SK-N-SH (cell line): ENCODE measurements at regions of chr17 and their contacts with region 1.

Region 1: GRCh38 chr17:29219378-29220047 is 27.1 kb upstream of the CRYBA1 start:
- DNase-seq: peak; percentile 86
- H3K4me3 ChIP-seq: peak overlapping the region in 1 of 2 experiments; percentile 17; a peak in 1 of 4 replicates
- H3K27ac ChIP-seq: no peak overlapping the region
- H3K4me1 ChIP-seq: peaks cover 0 to 6% of the 10 kb centered on the region in 2 experiments; a peak in 1 of 4 replicates
- H3K27me3 ChIP-seq: no peaks in the 10 kb centered on the region
- CTCF ChIP-seq: peak; percentile 97
- EP300 ChIP-seq: no peak; a peak in 1 of 4 replicates
- RAD21 ChIP-seq: peak; percentile 75

Region 2: GRCh38 chr17:29102741-29103181 is 116.8 kb before region 1 on chr17:
- CTCF ChIA-PET with region 1: no interaction called
- POLR2A ChIA-PET with region 1: no interaction called
- DNase-seq: peak; percentile 80
- H3K4me3 ChIP-seq: no peak overlapping the region
- H3K27ac ChIP-seq: peak overlapping the region in 1 of 2 experiments; percentile 95; a peak in 2 of 4 replicates
- H3K4me1 ChIP-seq: peaks cover 0 to 30% of the 10 kb centered on the region in 2 experiments; a peak in 2 of 4 replicates
- H3K27me3 ChIP-seq: no peaks in the 10 kb centered on the region
- CTCF ChIP-seq: no peak
- EP300 ChIP-seq: peak in 1 of 2 experiments; percentile 7; a peak in 1 of 4 replicates
- RAD21 ChIP-seq: no peak

Region 3: DNA sequence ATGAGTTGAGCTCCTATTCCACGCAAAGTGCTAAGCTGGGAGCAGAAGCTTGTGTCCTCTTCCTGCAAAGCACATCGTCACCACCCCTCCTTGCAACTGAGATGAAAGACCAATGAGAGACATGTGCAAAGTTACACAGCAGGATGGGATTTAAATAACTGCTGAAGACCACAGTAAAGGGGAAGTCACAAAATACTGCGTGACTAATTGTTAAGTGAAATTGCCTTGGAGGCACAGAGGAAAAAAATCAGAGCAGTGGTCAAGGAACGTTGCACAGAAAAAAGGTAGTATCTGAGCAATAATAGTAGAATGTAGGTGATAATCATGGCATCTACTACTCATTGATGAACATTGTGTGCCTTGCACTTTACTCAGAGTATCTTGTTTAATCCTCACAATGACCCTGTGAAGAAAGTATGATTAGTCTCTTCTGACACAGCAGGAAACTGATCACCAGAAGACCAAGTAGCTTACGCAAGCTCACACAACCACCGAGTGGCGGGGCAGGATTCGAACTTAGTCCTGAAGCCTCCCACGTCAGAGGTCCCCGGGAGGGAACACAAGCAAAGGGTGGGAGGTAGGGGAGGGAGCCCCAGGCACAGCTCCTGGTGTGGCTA is 23.9 kb before region 1 on chr17:
- CTCF ChIA-PET with region 1: interaction called, 17 read pairs
- POLR2A ChIA-PET with region 1: no interaction called
- DNase-seq: no peak
- H3K4me3 ChIP-seq: no peak overlapping the region
- H3K27ac ChIP-seq: no peak overlapping the region
- H3K4me1 ChIP-seq: no peaks in the 10 kb centered on the region
- H3K27me3 ChIP-seq: no peaks in the 10 kb centered on the region; the same call in 1 of the 2 replicates
- CTCF ChIP-seq: no peak
- EP300 ChIP-seq: no peak
- RAD21 ChIP-seq: no peak

Region 4: GRCh38 chr17:29241015-29241963 is 21.8 kb after region 1 on chr17:
- CTCF ChIA-PET with region 1: interaction called, 34 read pairs
- POLR2A ChIA-PET with region 1: no interaction called
- DNase-seq: peak; percentile 39
- H3K4me3 ChIP-seq: no peak overlapping the region
- H3K27ac ChIP-seq: peak overlapping the region; percentile 80 to 93
- H3K4me1 ChIP-seq: peaks cover 23 to 28% of the 10 kb centered on the region in 2 experiments
- H3K27me3 ChIP-seq: no peaks in the 10 kb centered on the region
- CTCF ChIP-seq: peak; percentile 26
- EP300 ChIP-seq: peak in 1 of 2 experiments; percentile 72; a peak in 2 of 4 replicates
- RAD21 ChIP-seq: peak; percentile 31